Activated B cell treated with CpG ODN at 0.5 μM for 24 hours (primary cell): ENCODE measurements at regions of chr19 and their contacts with region 1.

Region 1: GRCh38 chr19:8513687-8514504 is at the start of gene ZNF414:
- DNase-seq: peak; percentile 99
- ATAC-seq: peak; percentile 90
- H3K4me3 Mint-ChIP-seq: peak within 1 kb of the TSS; percentile 94
- H3K27ac Mint-ChIP-seq: peak within 1 kb of the TSS; percentile 98
- H3K4me1 Mint-ChIP-seq: peaks cover 27% of the 10 kb centered on the region
- H3K27me3 Mint-ChIP-seq: no peaks in the 10 kb centered on the region
- CTCF ChIP-seq: no peak
- total RNA-seq, gene ZNF414: 28.6 and 32.8 TPM in 2 replicates

Region 2: DNA sequence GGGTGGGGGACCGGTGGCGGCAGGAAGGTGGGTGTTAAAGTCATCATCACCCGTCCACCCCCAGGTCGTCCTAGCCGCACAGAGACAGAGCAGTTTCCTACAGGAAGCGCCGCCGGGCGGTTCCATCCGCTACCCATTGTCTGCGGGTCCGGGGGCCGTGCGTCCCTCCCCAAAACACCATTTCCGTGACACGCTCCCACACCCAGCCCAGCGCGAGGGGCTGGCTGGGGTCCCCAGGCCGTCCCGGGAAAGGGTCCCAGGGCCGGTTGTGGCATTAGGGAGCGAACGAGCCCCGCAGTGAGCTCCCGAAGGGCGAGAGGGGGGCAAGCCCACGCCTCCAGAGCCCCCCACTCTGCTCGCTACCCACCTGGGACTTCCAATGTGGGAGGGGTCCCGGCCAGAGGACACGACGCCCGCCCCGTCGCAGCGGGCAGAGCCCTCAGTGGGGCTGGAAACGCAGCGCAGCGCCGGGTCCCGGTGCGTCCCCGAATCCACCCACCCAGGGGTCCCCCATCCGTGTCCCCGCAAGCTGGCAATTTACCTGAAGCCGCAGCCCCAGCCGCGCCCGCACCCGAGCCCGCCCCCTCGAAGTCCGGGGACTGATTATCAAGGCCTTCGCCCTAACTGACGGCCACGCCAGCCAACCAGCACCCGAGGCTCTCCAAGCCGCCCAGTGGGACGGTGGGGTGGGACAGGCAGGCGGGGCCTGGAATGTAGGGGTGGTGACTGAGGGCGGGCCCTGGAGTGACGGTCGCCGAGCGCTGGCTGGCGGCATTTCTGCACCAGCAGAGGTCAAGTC is 171.0 kb before region 1 on chr19 and contains the start of gene KANK3:
- CTCF ChIA-PET with region 1: no interaction called
- POLR2A ChIA-PET with region 1: no interaction called
- intact Hi-C with region 1: loop called (anchors 5 kb)
- DNase-seq: peak; percentile 74
- ATAC-seq: peak; percentile 100
- H3K4me3 Mint-ChIP-seq: peak within 1 kb of the TSS; percentile 75
- H3K27ac Mint-ChIP-seq: no peak within 1 kb of the TSS
- H3K4me1 Mint-ChIP-seq: peaks cover 6% of the 10 kb centered on the region
- H3K27me3 Mint-ChIP-seq: peaks cover 21% of the 10 kb centered on the region
- CTCF ChIP-seq: no peak
- total RNA-seq, gene KANK3: 0.07 and 0.29 TPM in 2 replicates

Region 3: DNA sequence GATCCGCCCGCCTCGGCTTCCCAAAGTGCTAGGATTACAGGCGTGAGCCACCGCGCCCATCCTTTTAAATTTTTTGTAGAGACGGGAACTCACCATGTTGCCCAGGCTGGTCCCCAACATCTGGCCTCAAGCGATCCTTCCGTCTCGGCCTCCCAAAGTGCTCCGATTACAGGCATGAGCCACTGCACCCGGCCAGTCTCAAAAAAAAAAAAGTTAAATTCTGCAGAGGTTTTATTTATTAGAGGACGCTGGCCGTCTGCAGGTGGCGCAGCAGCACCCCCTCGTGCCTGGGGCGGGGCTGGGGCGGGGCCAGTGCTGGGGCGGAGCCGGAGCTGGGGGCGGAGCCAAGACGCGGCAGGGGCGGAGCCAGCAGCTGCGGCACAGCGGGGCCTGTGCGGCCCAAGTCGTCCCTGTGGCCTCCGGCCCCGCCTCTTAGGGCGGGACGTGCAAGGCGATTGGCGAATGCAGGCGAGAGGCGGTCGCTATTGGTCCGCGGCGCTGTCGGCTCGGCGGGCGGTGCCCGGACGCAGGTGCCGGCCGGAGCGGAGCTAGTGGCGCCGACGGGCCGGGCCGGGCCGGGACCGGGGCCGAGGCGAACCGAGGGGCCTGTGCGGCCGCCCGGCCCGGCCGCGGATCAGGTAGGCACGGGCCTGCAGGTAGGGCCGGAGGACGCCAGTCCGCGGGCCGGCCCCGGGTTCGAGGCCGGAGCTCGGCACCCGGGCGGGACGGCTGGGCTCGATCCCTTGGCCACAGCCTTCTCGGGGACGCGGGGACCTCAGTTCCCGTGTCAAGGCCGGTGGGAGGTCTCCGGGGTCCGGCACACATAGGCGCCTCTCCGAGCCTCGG is 100.9 kb before region 1 on chr19 and contains the start of gene MARCHF2:
- CTCF ChIA-PET with region 1: interaction called, 3 read pairs
- POLR2A ChIA-PET with region 1: interaction called, 23 read pairs
- intact Hi-C with region 1: loop called (anchors 1 kb)
- DNase-seq: peak; percentile 96
- ATAC-seq: peak; percentile 99
- H3K4me3 Mint-ChIP-seq: peak within 1 kb of the TSS; percentile 70
- H3K27ac Mint-ChIP-seq: no peak within 1 kb of the TSS
- H3K4me1 Mint-ChIP-seq: peaks cover 9% of the 10 kb centered on the region
- H3K27me3 Mint-ChIP-seq: no peaks in the 10 kb centered on the region
- CTCF ChIP-seq: no peak
- total RNA-seq, gene MARCHF2: 24.8 and 25.6 TPM in 2 replicates

Region 4: GRCh38 chr19:8473648-8474476 is 40.0 kb before region 1 on chr19:
- CTCF ChIA-PET with region 1: no interaction called
- POLR2A ChIA-PET with region 1: interaction called, 5 read pairs
- intact Hi-C with region 1: loop called (anchors 5 kb)
- DNase-seq: no peak
- ATAC-seq: peak; percentile 82
- H3K4me3 Mint-ChIP-seq: peak overlapping the region; percentile 76
- H3K27ac Mint-ChIP-seq: peak overlapping the region; percentile 89
- H3K4me1 Mint-ChIP-seq: peaks cover 54% of the 10 kb centered on the region
- H3K27me3 Mint-ChIP-seq: no peaks in the 10 kb centered on the region
- CTCF ChIP-seq: no peak

Region 5: GRCh38 chr19:8569066-8569771 is 55.3 kb after region 1 on chr19:
- CTCF ChIA-PET with region 1: no interaction called
- POLR2A ChIA-PET with region 1: interaction called, 11 read pairs
- intact Hi-C with region 1: no loop called
- DNase-seq: peak; percentile 19
- ATAC-seq: peak; percentile 90
- H3K4me3 Mint-ChIP-seq: peak overlapping the region; percentile 48
- H3K27ac Mint-ChIP-seq: peak overlapping the region; percentile 84
- H3K4me1 Mint-ChIP-seq: peaks cover 54% of the 10 kb centered on the region
- H3K27me3 Mint-ChIP-seq: no peaks in the 10 kb centered on the region
- CTCF ChIP-seq: no peak

Region 6: GRCh38 chr19:8580710-8581281 is 66.9 kb after region 1 on chr19:
- CTCF ChIA-PET with region 1: interaction called, 11 read pairs
- POLR2A ChIA-PET with region 1: interaction called, 26 read pairs
- intact Hi-C with region 1: loop called (anchors 2 kb)
- DNase-seq: peak; percentile 81
- ATAC-seq: peak; percentile 73
- H3K4me3 Mint-ChIP-seq: no peak overlapping the region
- H3K27ac Mint-ChIP-seq: no peak overlapping the region
- H3K4me1 Mint-ChIP-seq: peaks cover 35% of the 10 kb centered on the region
- H3K27me3 Mint-ChIP-seq: peaks cover 2% of the 10 kb centered on the region
- CTCF ChIP-seq: peak; percentile 95